ENCODE measurements at regions of chr4 and their contacts with region 1.

Region 1: GRCh38 chr4:76499461-76499860 is 64.4 kb downstream of the SHROOM3 start:
- DNase-seq: peak; percentile 44
- CTCF ChIP-seq: no peak

Region 2: GRCh38 chr4:76410636-76411035 is 88.8 kb before region 1 on chr4:
- CTCF ChIA-PET with region 1: no interaction called
- POLR2A ChIA-PET with region 1: no interaction called
- DNase-seq: no peak
- CTCF ChIP-seq: no peak

Region 3: DNA sequence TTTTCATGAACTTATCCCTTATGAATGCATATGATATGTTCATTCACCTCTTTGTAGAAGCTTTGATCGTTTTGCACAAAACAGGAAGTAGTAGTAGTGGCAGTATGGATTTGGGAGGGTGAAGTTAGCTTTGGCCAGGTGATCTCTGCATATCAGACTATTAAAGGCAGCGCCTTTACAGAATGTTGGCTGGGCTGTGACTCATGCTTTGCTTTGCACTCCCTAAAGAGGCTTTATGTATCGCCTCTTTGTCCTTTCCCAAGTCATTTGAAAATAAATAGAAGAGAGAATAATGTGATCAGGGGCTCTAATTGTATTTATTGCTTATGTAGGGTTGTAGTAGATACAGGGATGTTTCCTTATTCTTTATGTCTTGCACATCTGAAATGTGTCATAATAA is 14.0 kb before region 1 on chr4:
- CTCF ChIA-PET with region 1: interaction called, 17 read pairs
- POLR2A ChIA-PET with region 1: no interaction called
- DNase-seq: no peak
- CTCF ChIP-seq: no peak

Region 4: DNA sequence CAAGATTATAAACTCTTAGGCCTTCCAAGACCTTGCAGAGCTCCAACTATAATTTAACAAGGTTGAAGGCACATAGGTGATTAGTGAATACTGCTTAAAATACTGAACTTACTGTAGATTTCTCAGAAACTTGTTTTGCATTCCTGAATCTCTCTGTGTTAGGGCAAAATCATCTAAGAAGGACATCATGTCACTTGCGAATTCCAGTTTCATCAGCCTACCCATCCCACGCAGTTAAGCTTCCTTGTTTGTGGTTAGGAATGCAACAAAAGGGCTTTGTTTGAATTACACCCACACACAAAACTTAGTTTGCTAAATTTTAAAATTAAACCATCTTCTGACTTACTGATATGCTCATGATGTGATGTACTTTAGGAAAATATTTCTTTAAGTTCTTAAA is 224.5 kb after region 1 on chr4:
- CTCF ChIA-PET with region 1: no interaction called
- POLR2A ChIA-PET with region 1: no interaction called
- DNase-seq: no peak
- CTCF ChIP-seq: no peak

Region 5: DNA sequence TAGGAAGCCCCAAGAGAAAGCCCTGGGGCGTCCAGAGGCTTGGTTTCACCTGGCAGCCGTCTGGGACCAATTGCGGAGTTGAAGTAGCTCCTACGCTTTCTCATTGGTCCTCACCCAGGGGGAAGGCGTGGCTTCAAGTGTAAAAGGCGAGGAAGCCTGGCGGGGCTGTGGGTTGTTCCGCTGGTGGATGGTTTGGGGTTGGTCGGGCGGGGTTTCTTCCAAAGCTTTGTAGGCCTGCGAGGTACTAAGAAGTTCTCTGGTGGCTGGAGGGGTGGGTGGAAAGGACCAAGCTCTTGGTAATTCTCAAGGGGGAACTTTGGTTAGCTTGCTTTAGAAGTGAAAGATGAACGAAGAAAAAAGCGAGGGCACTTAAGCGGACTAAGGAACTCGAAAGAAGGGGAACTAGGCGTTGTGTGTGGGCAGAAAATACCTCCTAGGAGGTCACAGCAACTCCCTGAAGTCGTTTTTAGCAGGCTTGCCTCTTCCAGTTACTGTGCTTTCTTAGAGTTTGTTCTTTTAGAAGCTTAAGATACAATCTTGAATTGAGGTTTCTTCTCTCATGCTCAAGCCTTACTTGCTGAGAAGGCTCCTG is 694.1 kb after region 1 on chr4:
- CTCF ChIA-PET with region 1: no interaction called
- POLR2A ChIA-PET with region 1: no interaction called
- DNase-seq: peak; percentile 88
- CTCF ChIP-seq: no peak

Measured in GM10248 (cell line).